Cardiac septum (tissue), 1 donor: ENCODE measurements at regions of chr14 and their contacts with region 1.

Region 1: DNA sequence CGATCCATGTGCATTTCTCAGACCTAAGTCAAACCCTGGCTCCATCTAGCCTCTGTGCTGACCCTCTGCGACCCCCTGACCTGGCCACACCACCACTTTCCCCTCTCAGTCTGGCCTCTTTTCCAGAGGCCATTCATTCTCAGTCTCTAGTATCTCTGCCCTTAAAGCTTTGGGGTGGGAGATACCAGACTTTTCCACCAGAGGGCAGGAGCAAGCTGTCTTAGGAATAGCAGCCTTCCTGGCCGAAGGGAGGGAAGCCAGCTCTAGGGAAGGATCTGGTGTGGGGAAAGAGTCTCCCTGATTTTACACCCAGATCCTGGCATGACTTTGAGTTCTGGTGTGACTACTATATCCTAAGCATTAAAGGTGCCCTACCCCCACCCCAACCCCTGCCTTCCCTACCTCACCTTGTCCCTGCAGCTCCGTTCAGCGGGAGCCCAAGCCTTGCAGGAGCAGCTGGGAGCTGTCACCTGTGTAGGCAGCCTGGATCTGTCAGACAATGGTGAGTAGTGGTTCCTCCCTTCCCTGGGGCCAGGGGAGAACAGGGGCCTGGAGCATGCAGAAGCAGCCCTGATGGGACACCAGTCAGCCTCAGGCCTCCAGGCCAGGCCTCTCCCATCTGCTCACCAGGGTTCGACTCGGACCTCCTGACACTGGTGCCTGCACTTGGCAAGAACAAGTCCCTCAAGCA is 6.6 kb downstream of the CARMIL3 start:
- DNase-seq: peak; percentile 87

Region 2: DNA sequence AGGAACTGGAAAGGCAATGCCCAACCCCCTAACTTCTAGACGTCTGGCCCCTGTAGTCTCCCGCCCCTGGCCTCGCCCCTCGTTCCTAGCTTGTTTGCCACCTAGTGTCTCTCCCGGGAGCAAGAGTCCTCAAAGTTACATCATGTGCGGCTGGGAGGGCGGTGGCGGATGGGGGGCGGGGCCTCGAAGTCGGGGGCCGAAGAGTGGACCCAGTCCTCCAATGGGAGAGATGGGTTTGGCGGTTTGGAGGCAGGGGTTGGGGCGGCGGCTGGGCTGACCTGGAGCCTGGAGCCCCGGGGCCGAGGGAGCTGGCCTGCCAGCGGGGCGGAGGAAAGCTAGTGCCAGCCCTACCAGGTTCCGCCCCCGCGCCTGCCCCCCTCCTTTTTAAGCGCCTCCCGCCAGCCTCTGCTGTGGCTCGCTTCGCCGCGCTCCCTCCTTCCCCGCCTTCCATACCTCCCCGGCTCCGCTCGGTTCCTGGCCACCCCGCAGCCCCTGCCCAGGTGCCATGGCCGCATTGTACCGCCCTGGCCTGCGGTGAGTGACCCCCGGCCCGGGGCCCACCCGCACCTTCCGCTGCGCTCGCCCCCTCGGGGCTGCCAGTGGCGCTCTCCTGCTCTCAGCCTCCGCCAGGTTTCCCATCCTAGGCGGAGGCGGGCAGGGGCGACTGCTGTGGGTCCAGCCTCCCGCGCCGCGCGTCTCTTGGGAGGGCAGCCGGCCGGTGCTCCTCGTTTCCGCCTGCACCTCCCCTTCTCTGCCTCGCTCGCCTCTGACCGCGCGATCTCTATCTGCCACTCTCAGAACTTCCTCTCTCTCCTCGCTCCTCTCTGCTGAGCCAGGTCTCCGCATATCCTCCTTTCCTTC is 35.7 kb after region 1 on chr14 and contains the start of gene PCK2:
- intact Hi-C with region 1: loop called (anchors 1 kb)
- DNase-seq: peak; percentile 91
- total RNA-seq, gene PCK2: 2.2 TPM

Region 3: DNA sequence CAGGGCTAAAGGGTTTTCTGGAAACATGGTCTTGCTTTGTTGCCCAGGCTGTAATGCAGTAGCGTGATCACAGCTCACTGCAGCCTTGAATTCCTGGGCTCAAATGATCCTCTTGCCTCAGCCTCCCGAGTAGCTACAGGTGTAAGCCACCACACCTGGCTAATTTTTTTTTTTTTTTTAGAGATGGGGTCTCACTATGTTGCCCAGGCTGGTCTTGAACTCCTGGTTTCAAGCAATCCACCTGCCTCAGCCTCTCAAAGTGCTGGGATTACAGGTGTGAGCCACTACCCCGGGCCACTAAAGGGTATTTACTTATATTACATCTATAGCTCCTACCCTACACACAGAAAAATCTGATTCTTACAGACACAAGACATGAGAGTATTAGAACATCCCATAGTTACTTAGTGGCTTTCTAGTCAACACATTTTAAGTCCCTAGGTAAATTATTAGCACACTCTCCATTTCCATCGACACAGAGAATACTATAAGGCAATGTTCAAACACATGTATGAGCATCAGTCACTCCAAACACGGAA is 50.0 kb after region 1 on chr14:
- intact Hi-C with region 1: loop called (anchors 2 kb)
- DNase-seq: no peak

Region 4: GRCh38 chr14:24160850-24161804 is 102.7 kb after region 1 on chr14 and contains the start of gene IRF9:
- intact Hi-C with region 1: loop called (anchors 2 kb)
- DNase-seq: peak; percentile 98
- total RNA-seq, gene IRF9: 44.8 TPM

Region 5: GRCh38 chr14:24299255-24300195 is 241.1 kb after region 1 on chr14 and contains the starts of genes DHRS1 and NOP9:
- intact Hi-C with region 1: loop called (anchors 2 kb)
- DNase-seq: peak; percentile 97
- total RNA-seq, gene DHRS1: 8.5 TPM
- total RNA-seq, gene NOP9: 28.3 TPM